ENCODE measurements at regions of chr2 and their contacts with region 1.

Region 1: GRCh38 chr2:152648336-152648735 is 68.9 kb downstream of the PRPF40A start:
- DNase-seq: peak; percentile 32
- ATAC-seq: peak; percentile 46; the same call in 1 of the 2 replicates
- H3K4me3 ChIP-seq: no peak overlapping the region
- H3K27ac ChIP-seq: no peak overlapping the region
- H3K4me1 ChIP-seq: peaks cover 3% of the 10 kb centered on the region; the same call in 1 of the 2 replicates
- H3K27me3 ChIP-seq: no peaks in the 10 kb centered on the region
- CTCF ChIP-seq: peak; percentile 28; the same call in 1 of the 2 replicates
- POLR2A ChIP-seq: no peak
- RAD21 ChIP-seq: no peak

Region 2: GRCh38 chr2:152598975-152599759 is 49.2 kb before region 1 on chr2:
- CTCF ChIA-PET with region 1: no interaction called
- POLR2A ChIA-PET with region 1: no interaction called
- dilution Hi-C with region 1: no loop called
- in situ Hi-C with region 1: no loop called
- intact Hi-C with region 1: loop called (anchors 1 kb)
- DNase-seq: peak; percentile 42
- ATAC-seq: no peak
- H3K4me3 ChIP-seq: no peak overlapping the region
- H3K27ac ChIP-seq: no peak overlapping the region
- H3K4me1 ChIP-seq: peaks cover 4% of the 10 kb centered on the region
- H3K27me3 ChIP-seq: no peaks in the 10 kb centered on the region
- CTCF ChIP-seq: no peak
- POLR2A ChIP-seq: no peak
- RAD21 ChIP-seq: no peak

Region 3: GRCh38 chr2:152635635-152636298 is 12.6 kb before region 1 on chr2:
- CTCF ChIA-PET with region 1: interaction called, 10 read pairs
- POLR2A ChIA-PET with region 1: no interaction called
- dilution Hi-C with region 1: no loop called
- in situ Hi-C with region 1: no loop called
- intact Hi-C with region 1: no loop called
- DNase-seq: peak; percentile 53
- ATAC-seq: peak; percentile 79
- H3K4me3 ChIP-seq: no peak overlapping the region
- H3K27ac ChIP-seq: no peak overlapping the region
- H3K4me1 ChIP-seq: no peaks in the 10 kb centered on the region
- H3K27me3 ChIP-seq: no peaks in the 10 kb centered on the region
- CTCF ChIP-seq: peak; percentile 75
- POLR2A ChIP-seq: no peak
- RAD21 ChIP-seq: peak; percentile 82

Region 4: DNA sequence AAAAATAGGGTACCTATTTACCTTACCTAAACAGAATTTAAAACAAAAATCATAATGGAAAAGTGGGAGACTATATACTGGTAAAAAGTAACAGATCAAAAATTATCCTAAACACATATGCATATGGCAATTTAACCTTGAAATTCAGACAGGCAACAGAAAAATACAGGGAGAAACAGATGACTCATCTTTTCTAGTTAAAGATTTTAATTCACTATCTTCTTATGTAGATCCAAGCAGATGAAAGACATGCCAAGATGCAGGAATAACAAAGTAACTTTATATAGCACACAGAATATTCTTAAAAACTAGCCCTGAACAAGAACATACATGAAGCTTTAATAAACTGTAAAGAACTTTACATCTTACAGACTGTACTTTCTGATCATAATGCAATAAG is 38.0 kb after region 1 on chr2:
- CTCF ChIA-PET with region 1: no interaction called
- POLR2A ChIA-PET with region 1: no interaction called
- dilution Hi-C with region 1: no loop called
- in situ Hi-C with region 1: no loop called
- intact Hi-C with region 1: loop called (anchors 5 kb)
- DNase-seq: peak; percentile 18
- ATAC-seq: no peak
- H3K4me3 ChIP-seq: no peak overlapping the region
- H3K27ac ChIP-seq: no peak overlapping the region
- H3K4me1 ChIP-seq: no peaks in the 10 kb centered on the region
- H3K27me3 ChIP-seq: no peaks in the 10 kb centered on the region
- CTCF ChIP-seq: no peak
- POLR2A ChIP-seq: no peak
- RAD21 ChIP-seq: no peak